B cell (primary cell): ENCODE measurements at regions of chr7 and their contacts with region 1.

Region 1: DNA sequence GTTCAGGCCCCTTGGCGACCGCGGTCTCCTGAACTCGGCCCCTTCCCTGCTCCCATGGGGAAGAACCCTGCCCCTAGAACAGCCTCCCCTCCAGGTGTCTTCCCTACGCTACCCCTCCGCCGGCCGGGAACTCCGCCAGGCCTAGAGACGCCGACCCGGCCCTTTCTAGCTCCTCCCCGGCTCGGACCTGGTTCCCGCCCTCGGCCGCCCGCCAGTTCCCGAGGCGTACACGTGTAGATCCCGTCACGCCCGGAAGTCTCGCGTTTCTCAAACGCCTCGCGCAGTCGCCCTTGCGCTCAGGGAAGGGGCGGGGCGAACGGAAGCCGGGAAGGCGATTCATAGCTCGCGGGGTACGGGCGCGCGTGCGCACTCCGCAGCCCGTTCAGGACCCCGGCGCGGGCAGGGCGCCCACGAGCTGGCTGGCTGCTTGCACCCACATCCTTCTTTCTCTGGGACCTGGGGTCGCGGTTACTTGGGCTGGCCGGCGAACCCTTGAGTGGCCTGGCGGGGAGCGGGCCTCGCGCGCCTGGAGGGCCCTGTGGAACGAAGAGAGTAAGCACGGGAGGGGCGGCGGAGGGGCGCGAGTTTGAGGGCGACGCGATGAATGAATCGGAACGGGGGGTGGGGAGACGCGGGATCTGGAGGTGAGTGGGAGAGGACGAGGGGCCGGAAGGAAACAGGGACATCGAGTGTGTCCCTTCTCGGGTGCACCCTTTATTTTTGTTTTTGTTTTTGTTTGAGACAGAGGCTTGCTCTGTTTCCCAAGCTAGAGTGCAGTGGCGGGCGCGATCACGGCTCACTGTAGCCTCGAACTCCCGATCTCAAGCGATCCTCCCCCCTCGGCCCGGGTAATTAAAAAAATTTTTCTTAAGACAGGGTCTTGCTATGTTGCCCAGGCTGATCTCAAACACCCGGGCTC is at the start of gene POP7:
- DNase-seq: peak; percentile 98
- ATAC-seq: peak; percentile 94
- H3K4me3 ChIP-seq: peak within 1 kb of the TSS; percentile 57 to 96 (median 87)
- H3K4me3 Mint-ChIP-seq: peak within 1 kb of the TSS; percentile 94
- H3K27ac ChIP-seq: peak within 1 kb of the TSS; percentile 79 to 86
- H3K27ac Mint-ChIP-seq: peak within 1 kb of the TSS; percentile 96
- H3K4me1 ChIP-seq: peaks cover 8 to 20% of the 10 kb centered on the region in 2 donors
- H3K4me1 Mint-ChIP-seq: peaks cover 20% of the 10 kb centered on the region
- H3K27me3 ChIP-seq: no peaks in the 10 kb centered on the region
- H3K27me3 Mint-ChIP-seq: no peaks in the 10 kb centered on the region
- CTCF ChIP-seq: no peak
- total RNA-seq, gene POP7: 13.0 and 14.4 TPM in 2 replicates

Region 2: GRCh38 chr7:100435401-100436304 is 270.4 kb before region 1 on chr7:
- CTCF ChIA-PET with region 1: interaction called, 4 read pairs
- POLR2A ChIA-PET with region 1: interaction called, 4 read pairs
- intact Hi-C with region 1: loop called (anchors 1 kb)
- DNase-seq: peak; percentile 81
- ATAC-seq: peak; percentile 28
- H3K4me3 ChIP-seq: peak overlapping the region; percentile 39 to 96 (median 81)
- H3K4me3 Mint-ChIP-seq: peak overlapping the region; percentile 98
- H3K27ac ChIP-seq: peak overlapping the region; percentile 87 to 91
- H3K27ac Mint-ChIP-seq: peak overlapping the region; percentile 99
- H3K4me1 ChIP-seq: peaks cover 26 to 46% of the 10 kb centered on the region in 2 donors
- H3K4me1 Mint-ChIP-seq: peaks cover 50% of the 10 kb centered on the region
- H3K27me3 ChIP-seq: no peaks in the 10 kb centered on the region
- H3K27me3 Mint-ChIP-seq: no peaks in the 10 kb centered on the region
- CTCF ChIP-seq: no peak

Region 3: GRCh38 chr7:100586266-100587025 is 119.6 kb before region 1 on chr7 and contains the start of gene FBXO24:
- CTCF ChIA-PET with region 1: interaction called, 12 read pairs
- POLR2A ChIA-PET with region 1: interaction called, 11 read pairs
- intact Hi-C with region 1: loop called (anchors 1 kb)
- DNase-seq: peak; percentile 100
- ATAC-seq: peak; percentile 79
- H3K4me3 ChIP-seq: peak within 1 kb of the TSS; percentile 82 to 93 (median 85)
- H3K4me3 Mint-ChIP-seq: peak within 1 kb of the TSS; percentile 98
- H3K27ac ChIP-seq: peak within 1 kb of the TSS; percentile 94 to 97
- H3K27ac Mint-ChIP-seq: peak within 1 kb of the TSS; percentile 99
- H3K4me1 ChIP-seq: peaks cover 27 to 38% of the 10 kb centered on the region in 2 donors
- H3K4me1 Mint-ChIP-seq: peaks cover 44% of the 10 kb centered on the region
- H3K27me3 ChIP-seq: peaks cover 0 to 14% (median 5%) of the 10 kb centered on the region in 4 experiments
- H3K27me3 Mint-ChIP-seq: peaks cover 9% of the 10 kb centered on the region
- CTCF ChIP-seq: no peak
- total RNA-seq, gene FBXO24: 1.6 and 2.2 TPM in 2 replicates

Region 4: GRCh38 chr7:100632951-100633717 is 72.9 kb before region 1 on chr7:
- CTCF ChIA-PET with region 1: interaction called, 24 read pairs
- POLR2A ChIA-PET with region 1: no interaction called
- intact Hi-C with region 1: loop called (anchors 1 kb)
- DNase-seq: peak; percentile 77
- ATAC-seq: peak; percentile 77
- H3K4me3 ChIP-seq: peak overlapping the region in 4 of 5 experiments; percentile 62 to 82 (median 72)
- H3K4me3 Mint-ChIP-seq: peak overlapping the region; percentile 90
- H3K27ac ChIP-seq: peak overlapping the region in 1 of 2 donors; percentile 48
- H3K27ac Mint-ChIP-seq: peak overlapping the region; percentile 83
- H3K4me1 ChIP-seq: peaks cover 6 to 15% of the 10 kb centered on the region in 2 donors
- H3K4me1 Mint-ChIP-seq: peaks cover 10% of the 10 kb centered on the region
- H3K27me3 ChIP-seq: peaks cover 0 to 3% (median 0%) of the 10 kb centered on the region in 4 experiments
- H3K27me3 Mint-ChIP-seq: no peaks in the 10 kb centered on the region
- CTCF ChIP-seq: no peak

Region 5: GRCh38 chr7:100691676-100692577 is 14.1 kb before region 1 on chr7:
- CTCF ChIA-PET with region 1: interaction called, 85 read pairs
- POLR2A ChIA-PET with region 1: interaction called, 29 read pairs
- intact Hi-C with region 1: loop called (anchors 1 kb)
- DNase-seq: peak; percentile 86
- ATAC-seq: peak; percentile 60
- H3K4me3 ChIP-seq: peak overlapping the region in 2 of 5 experiments; percentile 58 to 79
- H3K4me3 Mint-ChIP-seq: peak overlapping the region; percentile 89
- H3K27ac ChIP-seq: no peak overlapping the region
- H3K27ac Mint-ChIP-seq: peak overlapping the region; percentile 92
- H3K4me1 ChIP-seq: peaks cover 52 to 55% of the 10 kb centered on the region in 2 donors
- H3K4me1 Mint-ChIP-seq: peaks cover 51% of the 10 kb centered on the region
- H3K27me3 ChIP-seq: no peaks in the 10 kb centered on the region
- H3K27me3 Mint-ChIP-seq: no peaks in the 10 kb centered on the region
- CTCF ChIP-seq: peak; percentile 88

Region 6: GRCh38 chr7:100837099-100837836 is 131.3 kb after region 1 on chr7:
- CTCF ChIA-PET with region 1: interaction called, 3 read pairs
- POLR2A ChIA-PET with region 1: no interaction called
- intact Hi-C with region 1: loop called (anchors 1 kb)
- DNase-seq: peak; percentile 84
- ATAC-seq: peak; percentile 98
- H3K4me3 ChIP-seq: peak overlapping the region; percentile 30 to 75 (median 61)
- H3K4me3 Mint-ChIP-seq: peak overlapping the region; percentile 88
- H3K27ac ChIP-seq: peak overlapping the region; percentile 25 to 41
- H3K27ac Mint-ChIP-seq: peak overlapping the region; percentile 86
- H3K4me1 ChIP-seq: peaks cover 3 to 17% of the 10 kb centered on the region in 2 donors
- H3K4me1 Mint-ChIP-seq: peaks cover 14% of the 10 kb centered on the region
- H3K27me3 ChIP-seq: no peaks in the 10 kb centered on the region
- H3K27me3 Mint-ChIP-seq: no peaks in the 10 kb centered on the region
- CTCF ChIP-seq: no peak

Region 7: GRCh38 chr7:100867040-100867775 is 161.2 kb after region 1 on chr7 and contains the start of gene TRIP6:
- CTCF ChIA-PET with region 1: no interaction called
- POLR2A ChIA-PET with region 1: no interaction called
- intact Hi-C with region 1: no loop called
- DNase-seq: peak; percentile 55
- ATAC-seq: peak; percentile 44
- H3K4me3 ChIP-seq: peak within 1 kb of the TSS; percentile 5 to 75 (median 53)
- H3K4me3 Mint-ChIP-seq: peak within 1 kb of the TSS; percentile 89
- H3K27ac ChIP-seq: peak within 1 kb of the TSS; percentile 56 to 75
- H3K27ac Mint-ChIP-seq: peak within 1 kb of the TSS; percentile 84
- H3K4me1 ChIP-seq: peaks cover 21 to 28% of the 10 kb centered on the region in 2 donors
- H3K4me1 Mint-ChIP-seq: peaks cover 24% of the 10 kb centered on the region
- H3K27me3 ChIP-seq: no peaks in the 10 kb centered on the region
- H3K27me3 Mint-ChIP-seq: no peaks in the 10 kb centered on the region
- CTCF ChIP-seq: no peak
- total RNA-seq, gene TRIP6: 13.4 and 13.8 TPM in 2 replicates

Region 8: GRCh38 chr7:100942045-100942768 is 236.2 kb after region 1 on chr7:
- CTCF ChIA-PET with region 1: no interaction called
- POLR2A ChIA-PET with region 1: no interaction called
- intact Hi-C with region 1: no loop called
- DNase-seq: no peak
- ATAC-seq: no peak
- H3K4me3 ChIP-seq: no peak overlapping the region
- H3K4me3 Mint-ChIP-seq: no peak overlapping the region
- H3K27ac ChIP-seq: no peak overlapping the region
- H3K27ac Mint-ChIP-seq: no peak overlapping the region
- H3K4me1 ChIP-seq: no peaks in the 10 kb centered on the region
- H3K4me1 Mint-ChIP-seq: no peaks in the 10 kb centered on the region
- H3K27me3 ChIP-seq: peaks cover 0 to 11% (median 0%) of the 10 kb centered on the region in 4 experiments
- H3K27me3 Mint-ChIP-seq: peaks cover 26% of the 10 kb centered on the region
- CTCF ChIP-seq: no peak